PC-3 (cell line): ENCODE measurements at regions of chr12 and their contacts with region 1.

Region 1: GRCh38 chr12:83016218-83016835 is 329.6 kb downstream of the TMTC2 start:
- DNase-seq: peak; percentile 93
- ATAC-seq: peak; percentile 97
- H3K4me3 ChIP-seq: peak overlapping the region; percentile 61; the same call in 1 of the 2 replicates
- H3K27ac ChIP-seq: peak overlapping the region; percentile 20; the same call in 1 of the 2 replicates
- H3K4me1 ChIP-seq: peaks cover 19% of the 10 kb centered on the region
- H3K27me3 ChIP-seq: no peaks in the 10 kb centered on the region
- CTCF ChIP-seq: no peak

Region 2: DNA sequence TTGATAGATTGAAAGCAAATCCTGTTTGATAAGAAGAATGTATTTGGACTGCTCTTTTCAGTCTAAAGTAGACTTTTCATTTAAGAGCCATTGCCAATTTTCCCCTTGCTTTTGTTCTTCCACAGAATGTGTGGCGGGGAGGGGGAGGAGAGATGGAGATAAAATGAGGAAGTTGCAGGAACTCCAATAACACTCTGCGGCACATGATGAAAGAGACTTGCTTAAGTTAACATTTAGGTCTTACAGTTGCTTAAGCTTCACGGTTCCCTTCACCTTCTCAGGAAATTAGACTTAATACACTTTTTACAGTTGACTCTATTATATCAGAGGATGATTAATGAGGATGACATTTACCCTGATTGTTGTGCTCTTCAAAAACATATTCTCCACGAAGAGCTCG is 207.7 kb after region 1 on chr12:
- CTCF ChIA-PET with region 1: no interaction called
- POLR2A ChIA-PET with region 1: no interaction called
- intact Hi-C with region 1: loop called (anchors 1 kb)
- DNase-seq: no peak
- ATAC-seq: no peak
- H3K4me3 ChIP-seq: no peak overlapping the region
- H3K27ac ChIP-seq: no peak overlapping the region
- H3K4me1 ChIP-seq: peaks cover 14% of the 10 kb centered on the region
- H3K27me3 ChIP-seq: no peaks in the 10 kb centered on the region
- CTCF ChIP-seq: no peak

Region 3: DNA sequence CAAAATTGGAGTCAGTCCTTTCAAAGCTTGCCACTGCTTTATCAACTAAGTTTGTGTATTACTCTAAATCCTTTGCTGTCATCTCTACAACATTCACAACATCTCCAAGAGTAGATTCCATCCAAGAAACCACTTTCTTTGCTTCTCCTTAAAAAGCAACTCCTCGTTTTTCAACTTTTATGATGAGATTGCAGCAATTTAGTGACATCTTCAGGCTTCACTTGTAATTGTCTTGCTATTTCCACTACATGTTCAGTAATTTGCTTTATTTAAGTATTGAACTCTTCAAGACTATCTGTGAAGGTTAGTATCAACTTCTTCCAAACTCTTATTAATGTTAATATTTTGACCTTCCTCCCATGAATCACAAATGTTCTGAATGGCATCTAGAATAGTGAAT is 418.3 kb after region 1 on chr12:
- CTCF ChIA-PET with region 1: no interaction called
- POLR2A ChIA-PET with region 1: no interaction called
- intact Hi-C with region 1: loop called (anchors 10 kb)
- DNase-seq: peak; percentile 33
- ATAC-seq: no peak
- H3K4me3 ChIP-seq: no peak overlapping the region
- H3K27ac ChIP-seq: no peak overlapping the region
- H3K4me1 ChIP-seq: no peaks in the 10 kb centered on the region
- H3K27me3 ChIP-seq: no peaks in the 10 kb centered on the region
- CTCF ChIP-seq: peak; percentile 37; the same call in 1 of the 2 replicates